ENCODE measurements at regions of chr10 and their contacts with region 1.

Region 1: GRCh38 chr10:13637303-13637856 is 50.6 kb downstream of the PRPF18 start:
- DNase-seq: no peak
- H3K4me3 ChIP-seq: no peak overlapping the region
- H3K27ac ChIP-seq: no peak overlapping the region
- H3K4me1 ChIP-seq: peaks cover 0 to 33% (median 14%) of the 10 kb centered on the region in 4 donors
- H3K27me3 ChIP-seq: no peaks in the 10 kb centered on the region
- CTCF ChIP-seq: no peak
- EP300 ChIP-seq: no peak
- POLR2A ChIP-seq: no peak

Region 2: GRCh38 chr10:13518076-13518692 is 119.2 kb before region 1 on chr10:
- intact Hi-C with region 1: no loop called
- DNase-seq: peak in 1 of 2 donors; percentile 64
- H3K4me3 ChIP-seq: no peak overlapping the region
- H3K27ac ChIP-seq: no peak overlapping the region
- H3K4me1 ChIP-seq: peaks cover 0 to 16% (median 0%) of the 10 kb centered on the region in 4 donors
- H3K27me3 ChIP-seq: no peaks in the 10 kb centered on the region
- CTCF ChIP-seq: peak in 3 of 7 experiments; percentile 17 to 24 (median 21)
- EP300 ChIP-seq: no peak
- POLR2A ChIP-seq: no peak

Region 3: GRCh38 chr10:13567030-13567429 is 70.3 kb before region 1 on chr10:
- intact Hi-C with region 1: no loop called
- DNase-seq: no peak
- H3K4me3 ChIP-seq: no peak overlapping the region
- H3K27ac ChIP-seq: no peak overlapping the region
- H3K4me1 ChIP-seq: no peaks in the 10 kb centered on the region
- H3K27me3 ChIP-seq: no peaks in the 10 kb centered on the region
- CTCF ChIP-seq: no peak
- EP300 ChIP-seq: no peak
- POLR2A ChIP-seq: no peak

Region 4: GRCh38 chr10:13865758-13866491 is 228.5 kb after region 1 on chr10:
- intact Hi-C with region 1: loop called (anchors 5 kb)
- DNase-seq: no peak
- H3K4me3 ChIP-seq: no peak overlapping the region
- H3K27ac ChIP-seq: peak overlapping the region in 1 of 5 donors; percentile 26
- H3K4me1 ChIP-seq: peaks cover 0 to 10% (median 4%) of the 10 kb centered on the region in 4 donors
- H3K27me3 ChIP-seq: no peaks in the 10 kb centered on the region
- CTCF ChIP-seq: no peak
- EP300 ChIP-seq: no peak
- POLR2A ChIP-seq: no peak